ENCODE measurements at regions of chr6 and their contacts with region 1.

Region 1: DNA sequence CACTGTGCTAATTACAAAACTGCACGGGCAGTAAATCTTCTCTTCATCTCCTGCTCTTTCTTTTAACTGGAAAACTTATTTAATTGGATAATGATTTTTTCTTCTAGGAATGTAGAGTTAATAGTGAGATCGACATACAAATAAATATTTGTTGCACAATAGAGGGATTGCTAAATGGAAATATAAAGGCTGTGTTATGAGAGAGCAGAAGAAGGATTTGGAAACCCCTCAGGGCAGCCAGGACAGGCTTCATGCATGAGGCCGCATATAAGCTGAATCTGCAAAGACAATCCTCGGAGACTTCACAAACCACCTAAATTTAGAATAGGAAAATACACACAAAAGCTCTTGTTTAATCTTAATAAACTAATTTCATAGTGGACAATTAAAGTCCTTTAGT is 2.9 kb upstream of the TAAR1 start:
- DNase-seq: no peak
- H3K4me3 ChIP-seq: no peak overlapping the region
- H3K27ac ChIP-seq: no peak overlapping the region
- H3K27me3 ChIP-seq: no peaks in the 10 kb centered on the region
- CTCF ChIP-seq: no peak

Region 2: DNA sequence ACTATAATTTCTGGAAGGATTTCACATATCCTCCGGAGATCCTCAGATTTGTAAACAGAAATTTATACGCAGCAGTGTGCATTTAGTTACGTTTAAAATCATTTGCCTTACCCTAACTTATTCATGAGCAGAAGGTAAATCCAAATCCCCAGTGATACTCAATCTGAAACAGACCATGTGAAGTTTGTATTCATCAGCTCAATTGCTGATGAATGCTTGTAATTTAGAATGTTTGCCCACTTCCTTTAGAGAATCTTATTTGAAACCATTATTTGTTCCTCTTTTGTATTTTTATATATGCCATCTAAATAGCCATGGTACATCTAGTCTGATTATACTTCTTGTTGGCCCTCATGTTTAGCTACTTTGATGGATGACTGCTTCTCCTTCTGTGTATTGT is 18.4 kb before region 1 on chr6:
- intact Hi-C with region 1: loop called in 1 of 2 experiments (anchors 2 kb)
- DNase-seq: no peak
- H3K4me3 ChIP-seq: no peak overlapping the region
- H3K27ac ChIP-seq: no peak overlapping the region
- H3K27me3 ChIP-seq: no peaks in the 10 kb centered on the region
- CTCF ChIP-seq: no peak